GM12878 (cell line): ENCODE measurements at regions of chr5 and their contacts with region 1.

Region 1: DNA sequence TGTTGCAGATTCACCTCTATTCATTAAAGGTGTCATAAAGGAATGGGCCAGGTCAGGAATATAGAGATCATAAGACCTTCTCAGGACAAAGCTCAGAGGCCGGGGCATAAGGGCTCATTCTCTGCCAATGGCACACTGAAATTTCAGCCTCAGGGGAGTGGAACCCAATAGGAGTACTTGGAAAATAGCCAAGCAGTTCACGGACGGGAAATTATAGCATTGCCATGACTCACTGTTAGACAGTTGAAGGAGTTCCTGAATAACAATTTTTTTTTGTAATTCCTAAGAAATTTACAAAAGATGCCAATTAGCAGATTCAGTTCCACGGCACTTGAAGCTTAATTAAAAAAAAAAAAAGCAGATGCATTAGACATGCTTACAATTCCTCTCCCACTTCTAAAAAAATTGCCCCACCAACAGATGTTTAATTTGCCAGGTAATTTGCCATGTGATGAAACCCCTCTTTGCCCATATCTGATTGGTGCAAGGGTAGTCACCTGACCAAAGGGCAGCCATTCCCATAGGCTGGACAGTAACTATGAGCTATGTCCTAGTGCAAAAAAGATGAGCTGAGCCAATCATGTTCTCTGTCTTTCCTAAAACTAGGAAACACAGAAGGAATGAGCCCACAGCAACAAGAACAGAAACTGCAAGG is 58.6 kb downstream of the PTCD2 start:
- DNase-seq: no peak
- ATAC-seq: no peak
- H3K4me3 ChIP-seq: no peak overlapping the region
- H3K27ac ChIP-seq: no peak overlapping the region
- H3K4me1 ChIP-seq: peaks cover 9% of the 10 kb centered on the region
- H3K27me3 ChIP-seq: no peaks in the 10 kb centered on the region
- CTCF ChIP-seq: no peak
- EP300 ChIP-seq: no peak
- POLR2A ChIP-seq: no peak
- RAD21 ChIP-seq: no peak

Region 2: GRCh38 chr5:72510610-72511181 is 131.9 kb after region 1 on chr5:
- CTCF ChIA-PET with region 1: no interaction called
- POLR2A ChIA-PET with region 1: no interaction called
- RAD21 ChIA-PET with region 1: no interaction called
- SMC1A ChIA-PET with region 1: interaction called, 3 read pairs
- in situ Hi-C with region 1: loop called (anchors 10 kb)
- intact Hi-C with region 1: no loop called
- DNase-seq: no peak
- ATAC-seq: no peak
- H3K4me3 ChIP-seq: no peak overlapping the region
- H3K27ac ChIP-seq: peak overlapping the region; percentile 33
- H3K4me1 ChIP-seq: peaks cover 45% of the 10 kb centered on the region
- H3K27me3 ChIP-seq: no peaks in the 10 kb centered on the region
- CTCF ChIP-seq: no peak
- EP300 ChIP-seq: no peak
- POLR2A ChIP-seq: no peak
- RAD21 ChIP-seq: no peak

Region 3: GRCh38 chr5:72822944-72823343 is 444.2 kb after region 1 on chr5:
- CTCF ChIA-PET with region 1: interaction called, 3 read pairs
- POLR2A ChIA-PET with region 1: no interaction called
- RAD21 ChIA-PET with region 1: no interaction called
- SMC1A ChIA-PET with region 1: no interaction called
- in situ Hi-C with region 1: loop called (anchors 10 kb)
- intact Hi-C with region 1: no loop called
- DNase-seq: no peak
- ATAC-seq: peak; percentile 31; the same call in 2 of the 3 replicates
- H3K4me3 ChIP-seq: no peak overlapping the region
- H3K27ac ChIP-seq: no peak overlapping the region
- H3K4me1 ChIP-seq: peaks cover 12% of the 10 kb centered on the region; the same call in 1 of the 2 replicates
- H3K27me3 ChIP-seq: no peaks in the 10 kb centered on the region
- CTCF ChIP-seq: no peak
- EP300 ChIP-seq: no peak
- POLR2A ChIP-seq: no peak
- RAD21 ChIP-seq: no peak